ENCODE measurements at regions of chr17 and their contacts with region 1.

Region 1: GRCh38 chr17:76557368-76558197 is 17.7 kb downstream of the PRCD start:
- DNase-seq: peak; percentile 98
- ATAC-seq: peak; percentile 95
- H3K4me3 ChIP-seq: peak overlapping the region; percentile 79 to 89 (median 86)
- H3K27ac ChIP-seq: peak overlapping the region; percentile 90
- H3K4me1 ChIP-seq: peaks cover 67% of the 10 kb centered on the region
- H3K27me3 ChIP-seq: no peaks in the 10 kb centered on the region; a peak in 1 of 5 replicates
- CTCF ChIP-seq: peak; percentile 88
- EP300 ChIP-seq: peak in 1 of 2 experiments; percentile 11; a peak in 1 of 4 replicates
- POLR2A ChIP-seq: peak; percentile 99 to 100
- RAD21 ChIP-seq: peak; percentile 64

Region 2: DNA sequence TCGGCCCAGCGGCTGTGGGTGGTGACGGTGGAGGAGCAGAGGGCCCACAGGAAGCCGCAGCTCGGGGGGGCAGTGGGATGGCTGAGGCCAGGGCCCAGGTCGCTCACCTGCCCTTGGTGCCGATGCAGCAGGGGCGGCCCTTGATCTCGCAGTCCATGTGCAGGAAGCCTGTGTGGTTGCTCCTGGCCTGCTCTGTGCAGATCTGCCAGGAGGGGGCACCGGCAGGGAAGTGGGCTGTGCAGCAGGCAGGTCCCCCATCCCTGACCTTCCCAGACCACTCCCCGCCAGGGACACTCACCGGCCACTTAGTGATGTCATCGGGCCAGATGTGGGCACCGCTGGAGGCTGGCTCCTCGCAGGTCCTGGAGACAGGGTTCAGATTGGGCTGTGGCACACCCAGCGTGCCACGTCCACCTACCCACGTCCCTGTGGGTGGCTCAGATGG is 84.0 kb before region 1 on chr17:
- CTCF ChIA-PET with region 1: no interaction called
- POLR2A ChIA-PET with region 1: no interaction called
- in situ Hi-C with region 1: no loop called
- intact Hi-C with region 1: no loop called
- DNase-seq: no peak
- ATAC-seq: peak; percentile 80
- H3K4me3 ChIP-seq: no peak overlapping the region
- H3K27ac ChIP-seq: no peak overlapping the region
- H3K4me1 ChIP-seq: peaks cover 19% of the 10 kb centered on the region
- H3K27me3 ChIP-seq: no peaks in the 10 kb centered on the region
- CTCF ChIP-seq: peak; percentile 78
- EP300 ChIP-seq: no peak
- POLR2A ChIP-seq: no peak
- RAD21 ChIP-seq: peak; percentile 82

Region 3: DNA sequence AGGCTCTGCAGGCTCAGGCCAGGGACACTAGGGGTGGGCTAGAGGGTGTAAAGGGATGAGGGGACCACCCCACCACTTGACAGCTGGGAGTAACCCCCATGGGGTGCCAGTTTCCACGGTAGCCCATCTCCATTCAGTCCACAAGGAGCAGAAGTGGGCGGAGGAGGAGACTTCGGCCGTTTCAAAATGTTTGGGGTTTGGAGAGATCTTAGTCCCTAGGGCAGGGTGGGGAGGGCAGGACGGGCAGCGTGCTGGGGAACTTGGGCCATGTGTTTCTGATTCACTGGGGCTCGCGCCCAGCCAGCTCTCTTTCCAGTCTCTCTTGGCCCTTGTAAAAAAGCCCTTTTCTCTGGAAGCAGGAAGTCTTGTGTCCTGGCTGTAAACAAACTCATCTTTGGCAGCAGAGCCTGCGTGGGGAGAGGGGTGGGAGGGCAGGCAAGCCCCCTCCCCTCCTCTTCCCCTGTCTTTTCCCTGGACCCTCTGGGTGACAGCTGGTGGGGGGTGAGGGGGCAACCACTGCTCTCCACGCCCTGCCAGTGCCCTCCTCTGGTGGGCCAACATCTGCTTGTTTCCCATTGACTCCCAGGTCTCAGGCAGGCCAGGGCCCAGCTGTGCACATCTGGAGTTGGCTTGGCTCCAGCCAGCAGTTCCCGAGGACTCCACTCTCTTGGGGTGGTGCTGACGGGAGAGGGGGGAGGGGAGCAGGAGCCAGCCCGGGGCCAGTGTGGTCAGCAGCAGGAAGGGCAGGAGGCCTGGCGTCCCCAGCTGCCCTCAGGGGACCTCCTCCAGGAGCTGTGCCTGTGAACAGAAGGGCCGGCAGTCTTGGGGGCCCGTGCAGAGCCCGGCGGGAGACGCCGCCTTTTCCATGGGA is 28.1 kb before region 1 on chr17:
- CTCF ChIA-PET with region 1: interaction called, 3 read pairs
- POLR2A ChIA-PET with region 1: interaction called, 50 read pairs
- in situ Hi-C with region 1: loop called (anchors 5 kb)
- intact Hi-C with region 1: no loop called
- DNase-seq: peak; percentile 61
- ATAC-seq: peak; percentile 13
- H3K4me3 ChIP-seq: peak overlapping the region in 1 of 3 experiments; percentile 35; a peak in 1 of 6 replicates
- H3K27ac ChIP-seq: peak overlapping the region; percentile 60
- H3K4me1 ChIP-seq: peaks cover 91% of the 10 kb centered on the region
- H3K27me3 ChIP-seq: no peaks in the 10 kb centered on the region
- CTCF ChIP-seq: peak; percentile 22; the same call in 1 of the 2 replicates
- EP300 ChIP-seq: peak; percentile 19; a peak in 1 of 4 replicates
- POLR2A ChIP-seq: no peak
- RAD21 ChIP-seq: no peak

Region 4: DNA sequence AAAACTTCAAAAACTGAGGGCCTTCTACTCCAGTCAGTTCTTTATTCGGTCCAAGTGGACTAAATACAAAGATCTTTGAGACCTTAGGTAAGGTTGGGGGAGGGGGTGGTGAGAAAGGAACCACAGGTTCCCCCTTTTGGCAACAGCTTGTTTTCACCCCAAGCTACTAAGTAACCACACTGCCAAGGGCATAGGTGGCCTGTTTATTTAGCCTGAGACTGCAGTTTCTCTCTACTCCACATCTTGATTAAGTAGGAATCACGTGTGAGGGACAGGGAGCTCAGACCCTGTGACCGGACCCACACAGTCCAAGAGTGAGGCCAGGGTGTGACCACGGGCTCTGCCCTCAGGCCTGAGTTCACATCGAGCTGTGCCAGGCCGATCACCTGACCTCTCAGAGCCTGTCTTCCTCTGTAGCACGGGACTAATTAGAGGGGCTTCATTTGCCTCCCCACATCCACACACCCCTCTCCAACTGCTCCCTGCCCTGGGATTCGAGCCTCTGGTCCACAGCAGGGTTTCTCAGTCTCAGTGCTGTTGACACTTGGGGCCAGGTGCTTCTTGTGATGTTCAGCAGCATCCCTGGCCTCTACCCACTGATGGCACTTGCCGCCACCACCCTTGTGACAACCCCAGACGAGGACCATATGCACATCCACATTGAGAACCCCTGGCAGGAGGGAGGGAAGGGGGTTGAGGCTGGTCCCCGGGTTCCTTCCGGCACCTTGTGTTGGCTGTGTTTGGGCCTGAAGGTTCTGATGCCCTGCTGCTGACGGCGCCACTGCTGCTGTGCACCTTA is 10.2 kb after region 1 on chr17:
- CTCF ChIA-PET with region 1: no interaction called
- POLR2A ChIA-PET with region 1: interaction called, 129 read pairs
- in situ Hi-C with region 1: no loop called
- intact Hi-C with region 1: no loop called
- DNase-seq: peak; percentile 60
- ATAC-seq: peak; percentile 45
- H3K4me3 ChIP-seq: no peak overlapping the region
- H3K27ac ChIP-seq: peak overlapping the region; percentile 45
- H3K4me1 ChIP-seq: peaks cover 75% of the 10 kb centered on the region
- H3K27me3 ChIP-seq: no peaks in the 10 kb centered on the region
- CTCF ChIP-seq: no peak
- EP300 ChIP-seq: no peak
- POLR2A ChIP-seq: peak in 1 of 2 experiments; percentile 30
- RAD21 ChIP-seq: peak; percentile 7; the same call in 1 of the 2 replicates

Region 5: DNA sequence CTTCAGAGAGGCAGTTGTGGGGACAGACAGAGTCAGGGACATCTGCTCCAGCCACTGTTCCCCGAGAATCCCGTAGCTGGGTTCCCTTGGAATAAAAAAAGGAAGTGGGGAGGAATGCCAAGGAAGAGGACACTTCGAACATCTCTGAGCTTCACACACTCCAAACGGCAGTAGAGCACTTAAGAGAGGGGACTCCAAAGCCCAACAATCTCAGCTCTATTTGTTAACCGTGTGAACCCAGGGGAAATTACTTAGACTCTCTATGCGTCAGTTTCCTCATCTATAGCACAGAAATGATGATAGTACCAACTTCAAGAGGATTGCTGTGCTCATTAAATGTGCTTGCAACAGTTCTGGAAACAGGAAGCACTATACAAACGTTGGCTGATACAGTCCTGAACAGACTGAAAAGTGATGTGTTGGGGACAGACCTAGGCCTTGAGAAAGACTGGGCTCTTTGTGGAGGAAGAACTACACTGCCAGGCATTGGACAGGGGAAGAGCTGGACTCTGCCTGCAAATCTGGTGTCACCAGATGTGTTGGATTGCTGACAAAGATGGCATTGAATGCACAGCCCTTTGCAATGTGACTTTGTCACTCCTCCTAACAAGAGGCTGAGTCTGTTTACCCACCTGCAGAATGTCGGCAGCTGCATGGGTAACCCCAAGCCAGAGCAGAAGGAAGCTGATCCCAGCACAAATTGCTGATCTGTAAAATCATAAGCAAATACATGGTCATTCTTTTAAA is 40.3 kb after region 1 on chr17:
- CTCF ChIA-PET with region 1: no interaction called
- POLR2A ChIA-PET with region 1: interaction called, 22 read pairs
- in situ Hi-C with region 1: no loop called
- intact Hi-C with region 1: no loop called
- DNase-seq: peak; percentile 67
- ATAC-seq: peak; percentile 71
- H3K4me3 ChIP-seq: peak overlapping the region in 1 of 3 experiments; percentile 38; a peak in 2 of 6 replicates
- H3K27ac ChIP-seq: peak overlapping the region; percentile 65
- H3K4me1 ChIP-seq: peaks cover 77% of the 10 kb centered on the region
- H3K27me3 ChIP-seq: no peaks in the 10 kb centered on the region
- CTCF ChIP-seq: no peak
- EP300 ChIP-seq: no peak
- POLR2A ChIP-seq: no peak
- RAD21 ChIP-seq: no peak

Region 6: GRCh38 chr17:76623271-76624146 is 65.9 kb after region 1 on chr17:
- CTCF ChIA-PET with region 1: interaction called, 19 read pairs
- POLR2A ChIA-PET with region 1: interaction called, 22 read pairs
- in situ Hi-C with region 1: loop called (anchors 10 kb)
- intact Hi-C with region 1: no loop called
- DNase-seq: peak; percentile 41
- ATAC-seq: peak; percentile 84
- H3K4me3 ChIP-seq: peak overlapping the region in 2 of 3 experiments; percentile 44; a peak in 4 of 6 replicates
- H3K27ac ChIP-seq: no peak overlapping the region
- H3K4me1 ChIP-seq: peaks cover 13% of the 10 kb centered on the region
- H3K27me3 ChIP-seq: peaks cover 0 to 2% of the 10 kb centered on the region in 2 experiments; a peak in 1 of 5 replicates
- CTCF ChIP-seq: peak; percentile 93
- EP300 ChIP-seq: no peak
- POLR2A ChIP-seq: no peak
- RAD21 ChIP-seq: peak; percentile 95

Measured in HepG2 (cell line).